ENCODE measurements at regions of chr14 and their contacts with region 1.

Region 1: GRCh38 chr14:67619446-67620216 is at the start of gene ARG2:
- DNase-seq: peak; percentile 88 to 99 (median 96)
- ATAC-seq: peak; percentile 91 to 98 (median 98)
- H3K4me3 ChIP-seq: peak within 1 kb of the TSS; percentile 79 to 92
- H3K4me3 Mint-ChIP-seq: peak within 1 kb of the TSS; percentile 83 to 89 (median 85)
- H3K27ac ChIP-seq: peak within 1 kb of the TSS; percentile 92
- H3K27ac Mint-ChIP-seq: peak within 1 kb of the TSS; percentile 80 to 87
- H3K4me1 ChIP-seq: peaks cover 19 to 27% of the 10 kb centered on the region in 2 experiments
- H3K4me1 Mint-ChIP-seq: peaks cover 35 to 38% (median 36%) of the 10 kb centered on the region in 3 donors
- H3K27me3 ChIP-seq: peaks cover 2 to 11% of the 10 kb centered on the region in 2 experiments
- H3K27me3 Mint-ChIP-seq: peaks cover 0 to 2% of the 10 kb centered on the region in 2 donors
- total RNA-seq, gene ARG2: 0.62 to 2.6 (median 1.1) TPM

Region 2: GRCh38 chr14:67583711-67584644 is 35.7 kb before region 1 on chr14:
- CTCF ChIA-PET with region 1: no interaction called
- POLR2A ChIA-PET with region 1: no interaction called
- DNase-seq: peak in 11 of 35 experiments; percentile 10 to 63 (median 19)
- ATAC-seq: peak; percentile 52 to 73 (median 64)
- H3K4me3 ChIP-seq: no peak overlapping the region
- H3K4me3 Mint-ChIP-seq: no peak overlapping the region
- H3K27ac ChIP-seq: no peak overlapping the region
- H3K27ac Mint-ChIP-seq: no peak overlapping the region
- H3K4me1 ChIP-seq: no peaks in the 10 kb centered on the region
- H3K4me1 Mint-ChIP-seq: no peaks in the 10 kb centered on the region
- H3K27me3 ChIP-seq: no peaks in the 10 kb centered on the region
- H3K27me3 Mint-ChIP-seq: no peaks in the 10 kb centered on the region

Region 3: GRCh38 chr14:67599698-67600561 is 19.7 kb before region 1 on chr14 and contains the start of gene PIGH:
- CTCF ChIA-PET with region 1: interaction called, 4 to 27 read pairs
- POLR2A ChIA-PET with region 1: interaction called, 4 to 9 read pairs
- DNase-seq: peak; percentile 84 to 97 (median 92)
- ATAC-seq: peak; percentile 97
- H3K4me3 ChIP-seq: peak within 1 kb of the TSS; percentile 88 to 90
- H3K4me3 Mint-ChIP-seq: peak within 1 kb of the TSS; percentile 87 to 98 (median 98)
- H3K27ac ChIP-seq: peak within 1 kb of the TSS; percentile 87
- H3K27ac Mint-ChIP-seq: peak within 1 kb of the TSS; percentile 94 to 95
- H3K4me1 ChIP-seq: peaks cover 11 to 14% of the 10 kb centered on the region in 2 experiments
- H3K4me1 Mint-ChIP-seq: peaks cover 37 to 52% (median 48%) of the 10 kb centered on the region in 3 donors
- H3K27me3 ChIP-seq: no peaks in the 10 kb centered on the region
- H3K27me3 Mint-ChIP-seq: no peaks in the 10 kb centered on the region
- total RNA-seq, gene PIGH: 28.7 to 46.8 (median 35.1) TPM

Region 4: DNA sequence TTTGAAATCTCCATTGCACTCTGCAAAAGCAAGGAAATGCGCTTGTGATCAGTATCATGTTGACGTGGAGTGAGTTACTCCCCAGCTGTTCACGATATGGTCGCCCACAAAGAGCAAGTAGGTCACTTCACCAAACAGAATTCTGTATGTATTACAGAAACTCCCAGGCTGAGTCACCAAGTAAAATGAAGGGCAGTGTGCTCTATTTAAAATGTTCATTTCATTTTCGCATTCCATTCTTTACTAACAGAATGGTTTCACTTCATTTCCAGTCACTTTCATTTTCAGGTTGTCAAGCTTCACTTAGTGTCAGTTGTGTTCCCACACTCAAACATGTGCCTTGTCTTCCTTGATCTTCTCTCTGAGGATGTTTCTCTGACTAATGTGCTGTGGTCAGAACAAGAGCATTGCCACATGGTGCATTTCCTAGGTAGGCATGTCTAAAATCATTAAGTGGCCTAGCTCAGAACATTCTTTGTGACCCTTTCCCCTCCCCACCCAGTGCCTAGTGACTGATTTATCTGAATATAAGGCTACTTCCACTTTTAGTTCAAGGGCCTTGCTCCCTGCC is 591.2 kb after region 1 on chr14:
- CTCF ChIA-PET with region 1: no interaction called
- POLR2A ChIA-PET with region 1: no interaction called
- DNase-seq: peak in 32 of 35 experiments; percentile 3 to 69 (median 20)
- ATAC-seq: peak; percentile 82 to 86 (median 83)
- H3K4me3 ChIP-seq: peak overlapping the region; percentile 25 to 30
- H3K4me3 Mint-ChIP-seq: peak overlapping the region; percentile 78 to 81 (median 78)
- H3K27ac ChIP-seq: peak overlapping the region; percentile 81
- H3K27ac Mint-ChIP-seq: peak overlapping the region; percentile 93 to 95
- H3K4me1 ChIP-seq: peaks cover 21 to 32% of the 10 kb centered on the region in 2 experiments
- H3K4me1 Mint-ChIP-seq: peaks cover 45 to 63% (median 54%) of the 10 kb centered on the region in 3 donors
- H3K27me3 ChIP-seq: no peaks in the 10 kb centered on the region
- H3K27me3 Mint-ChIP-seq: no peaks in the 10 kb centered on the region